HepG2 (cell line): ENCODE measurements at regions of chr3 and their contacts with region 1.

Region 1: DNA sequence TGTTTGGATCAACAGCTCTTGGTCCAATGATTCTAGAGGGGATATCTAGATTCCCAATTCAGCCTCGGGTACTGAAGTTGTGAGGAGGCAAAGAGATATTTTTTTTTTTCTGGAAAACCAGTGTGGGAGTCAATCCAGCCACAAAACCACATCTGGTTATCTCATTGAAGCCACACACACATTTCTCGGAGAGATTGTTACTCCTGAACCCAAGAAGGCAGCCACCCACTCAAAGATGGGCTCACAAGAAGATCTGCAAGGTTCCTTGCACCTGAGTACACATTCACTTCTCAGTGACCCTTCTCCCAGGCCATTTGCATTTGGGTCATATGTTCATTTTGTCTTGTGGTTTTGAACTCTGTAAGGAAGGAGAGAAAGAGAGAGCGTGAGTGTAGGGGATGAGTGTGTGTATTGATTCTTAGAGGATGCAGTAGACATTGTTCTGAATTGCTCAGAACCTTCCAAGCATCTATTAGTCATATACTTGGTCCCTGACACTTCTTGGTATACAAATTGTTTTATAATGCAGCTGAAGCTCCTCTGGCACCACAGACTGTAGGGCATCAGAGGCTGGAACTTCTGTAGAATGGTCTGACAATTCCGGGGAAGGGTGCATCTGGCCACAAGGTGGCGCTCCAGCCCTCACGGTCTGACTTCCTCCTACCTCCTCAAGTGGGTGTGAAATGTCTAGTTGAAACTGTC is 39.3 kb upstream of the TRA2B start:
- DNase-seq: peak; percentile 46
- ATAC-seq: peak; percentile 48
- H3K4me3 ChIP-seq: no peak overlapping the region
- H3K27ac ChIP-seq: no peak overlapping the region
- H3K4me1 ChIP-seq: peaks cover 26% of the 10 kb centered on the region
- H3K27me3 ChIP-seq: no peaks in the 10 kb centered on the region
- CTCF ChIP-seq: peak; percentile 86
- EP300 ChIP-seq: no peak
- POLR2A ChIP-seq: no peak
- RAD21 ChIP-seq: peak; percentile 59

Region 2: GRCh38 chr3:185572183-185572582 is 404.9 kb before region 1 on chr3:
- CTCF ChIA-PET with region 1: no interaction called
- POLR2A ChIA-PET with region 1: no interaction called
- in situ Hi-C with region 1: no loop called
- intact Hi-C with region 1: no loop called
- DNase-seq: no peak
- ATAC-seq: no peak
- H3K4me3 ChIP-seq: no peak overlapping the region
- H3K27ac ChIP-seq: no peak overlapping the region
- H3K4me1 ChIP-seq: peaks cover 6% of the 10 kb centered on the region; the same call in 1 of the 2 replicates
- H3K27me3 ChIP-seq: peaks cover 0 to 2% of the 10 kb centered on the region in 2 experiments; a peak in 1 of 5 replicates
- CTCF ChIP-seq: no peak
- EP300 ChIP-seq: no peak
- POLR2A ChIP-seq: no peak
- RAD21 ChIP-seq: no peak

Region 3: GRCh38 chr3:185927501-185928200 is 49.5 kb before region 1 on chr3:
- CTCF ChIA-PET with region 1: no interaction called
- POLR2A ChIA-PET with region 1: no interaction called
- in situ Hi-C with region 1: no loop called
- intact Hi-C with region 1: no loop called
- DNase-seq: peak; percentile 46
- ATAC-seq: peak; percentile 49
- H3K4me3 ChIP-seq: peak overlapping the region in 2 of 3 experiments; percentile 11 to 14; a peak in 2 of 6 replicates
- H3K27ac ChIP-seq: peak overlapping the region; percentile 41
- H3K4me1 ChIP-seq: peaks cover 81% of the 10 kb centered on the region
- H3K27me3 ChIP-seq: no peaks in the 10 kb centered on the region
- CTCF ChIP-seq: no peak
- EP300 ChIP-seq: no peak
- POLR2A ChIP-seq: 0 out of 4 replicates have a peak, but pooled peaks of 1 of the 2 experiments have one; percentile 39
- RAD21 ChIP-seq: no peak

Region 4: DNA sequence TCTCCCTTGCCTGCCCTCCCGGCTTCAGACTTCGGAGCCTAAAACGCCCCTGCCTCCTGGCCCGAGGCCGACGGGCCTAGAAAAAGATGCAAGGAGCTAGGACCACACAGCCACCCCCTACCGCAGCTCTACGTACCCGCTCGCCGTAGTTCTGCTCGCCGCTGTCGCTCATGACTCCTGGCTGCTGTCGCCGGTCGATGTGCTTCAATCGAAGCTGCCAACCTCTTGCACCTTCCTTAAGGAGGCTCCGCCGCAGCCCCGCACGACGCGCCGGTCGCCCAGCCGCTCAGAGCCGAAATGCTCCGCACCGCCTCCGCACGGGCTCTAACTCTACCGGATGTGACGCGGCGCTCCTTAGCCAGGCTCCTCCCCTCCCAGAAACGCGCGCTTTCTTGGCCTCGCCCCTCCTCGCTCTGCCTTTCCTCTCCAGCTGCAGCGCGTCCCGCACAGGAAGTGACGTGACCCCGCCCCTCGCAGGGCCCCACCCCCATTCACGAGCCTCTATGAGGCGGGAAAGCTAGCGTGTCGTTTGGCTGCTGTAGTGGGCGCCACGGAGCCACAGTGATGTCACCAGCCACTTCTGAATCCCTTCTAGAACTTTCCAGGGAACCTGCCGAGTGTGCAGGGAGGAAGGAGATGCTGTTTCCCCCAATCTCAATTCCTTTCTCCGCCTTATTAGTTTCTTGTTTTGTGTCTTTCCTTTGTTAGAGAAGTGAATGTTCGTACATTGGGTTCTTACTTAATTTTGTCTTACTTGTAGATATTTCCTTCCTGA is 39.3 kb before region 1 on chr3 and contains the start of gene TRA2B:
- CTCF ChIA-PET with region 1: interaction called, 12 read pairs
- POLR2A ChIA-PET with region 1: interaction called, 32 read pairs
- in situ Hi-C with region 1: no loop called
- intact Hi-C with region 1: loop called (anchors 1 kb)
- DNase-seq: peak; percentile 93
- ATAC-seq: peak; percentile 92
- H3K4me3 ChIP-seq: peak within 1 kb of the TSS; percentile 85 to 97 (median 95)
- H3K27ac ChIP-seq: peak within 1 kb of the TSS; percentile 96
- H3K4me1 ChIP-seq: peaks cover 29% of the 10 kb centered on the region
- H3K27me3 ChIP-seq: no peaks in the 10 kb centered on the region; a peak in 1 of 5 replicates
- CTCF ChIP-seq: peak; percentile 72
- EP300 ChIP-seq: peak; percentile 34 to 65; a peak in 3 of 4 replicates
- POLR2A ChIP-seq: peak; percentile 99 to 100
- RAD21 ChIP-seq: 0 out of 2 replicates have a peak, but pooled peaks have one; percentile 9
- total RNA-seq, gene TRA2B: 241 and 259 TPM in 2 replicates

Region 5: DNA sequence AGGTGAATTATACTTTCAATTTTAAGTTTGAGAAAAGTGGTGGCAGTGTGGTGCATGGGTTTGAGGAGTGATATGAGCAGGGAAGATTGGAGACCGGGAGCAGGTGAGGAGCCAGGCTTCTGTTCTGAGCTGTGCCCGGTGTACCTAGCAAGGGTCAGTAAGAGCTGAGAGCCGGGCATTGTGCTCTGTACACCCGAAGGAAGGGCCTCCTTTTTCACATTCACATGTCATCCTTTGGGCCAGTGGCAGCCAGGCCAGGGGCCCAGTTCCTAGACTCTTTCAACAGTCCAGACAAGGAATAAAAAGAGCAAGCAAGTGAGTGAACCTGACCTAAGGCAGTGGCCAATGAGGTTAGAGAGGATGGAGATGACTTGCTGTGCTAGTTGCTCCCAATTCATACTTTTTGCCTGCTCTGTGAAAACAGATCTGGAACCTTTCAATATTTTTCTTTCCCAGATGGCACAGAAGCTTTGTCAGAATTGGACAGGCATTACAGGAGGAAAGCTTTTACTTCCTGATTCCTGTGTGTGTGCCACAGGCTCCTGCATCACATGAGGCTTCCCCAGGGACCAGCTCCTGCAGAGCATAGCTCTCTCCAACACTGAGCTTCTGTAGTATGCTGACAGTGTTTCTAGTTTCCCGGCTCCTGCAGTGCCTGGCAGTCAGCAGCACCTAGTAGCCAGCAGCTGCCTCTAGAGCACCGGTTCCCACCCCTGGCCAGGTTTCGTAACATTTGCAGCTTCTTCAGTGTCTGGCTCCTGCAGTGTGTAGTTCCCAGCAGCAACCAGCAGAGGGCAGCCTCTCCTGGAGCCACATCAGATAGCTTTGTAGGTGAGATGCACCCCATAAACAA is 34.0 kb before region 1 on chr3:
- CTCF ChIA-PET with region 1: interaction called, 12 read pairs
- POLR2A ChIA-PET with region 1: interaction called, 32 read pairs
- in situ Hi-C with region 1: no loop called
- intact Hi-C with region 1: loop called (anchors 1 kb)
- DNase-seq: peak; percentile 88
- ATAC-seq: peak; percentile 97
- H3K4me3 ChIP-seq: peak overlapping the region; percentile 10 to 59 (median 36)
- H3K27ac ChIP-seq: peak overlapping the region; percentile 13
- H3K4me1 ChIP-seq: peaks cover 35% of the 10 kb centered on the region
- H3K27me3 ChIP-seq: no peaks in the 10 kb centered on the region
- CTCF ChIP-seq: peak; percentile 96
- EP300 ChIP-seq: 0 out of 4 replicates have a peak, but pooled peaks of 1 of the 2 experiments have one; percentile 11
- POLR2A ChIP-seq: no peak
- RAD21 ChIP-seq: peak; percentile 82

Region 6: GRCh38 chr3:185954366-185954723 is 22.8 kb before region 1 on chr3:
- CTCF ChIA-PET with region 1: interaction called, 10 read pairs
- POLR2A ChIA-PET with region 1: interaction called, 30 read pairs
- in situ Hi-C with region 1: no loop called
- intact Hi-C with region 1: loop called (anchors 1 kb)
- DNase-seq: peak; percentile 36
- ATAC-seq: no peak
- H3K4me3 ChIP-seq: peak overlapping the region in 1 of 3 experiments; percentile 22; a peak in 1 of 6 replicates
- H3K27ac ChIP-seq: peak overlapping the region; percentile 82
- H3K4me1 ChIP-seq: peaks cover 46% of the 10 kb centered on the region
- H3K27me3 ChIP-seq: no peaks in the 10 kb centered on the region
- CTCF ChIP-seq: no peak
- EP300 ChIP-seq: no peak
- POLR2A ChIP-seq: no peak
- RAD21 ChIP-seq: no peak

Region 7: GRCh38 chr3:185959609-185960517 is 17.3 kb before region 1 on chr3:
- CTCF ChIA-PET with region 1: no interaction called
- POLR2A ChIA-PET with region 1: interaction called, 18 read pairs
- in situ Hi-C with region 1: no loop called
- intact Hi-C with region 1: loop called (anchors 1 kb)
- DNase-seq: peak; percentile 88
- ATAC-seq: peak; percentile 74
- H3K4me3 ChIP-seq: peak overlapping the region; percentile 14 to 56 (median 53)
- H3K27ac ChIP-seq: peak overlapping the region; percentile 95
- H3K4me1 ChIP-seq: peaks cover 62% of the 10 kb centered on the region
- H3K27me3 ChIP-seq: no peaks in the 10 kb centered on the region
- CTCF ChIP-seq: no peak
- EP300 ChIP-seq: peak in 1 of 2 experiments; percentile 32; a peak in 1 of 4 replicates
- POLR2A ChIP-seq: peak in 1 of 2 experiments; percentile 62; a peak in 2 of 4 replicates
- RAD21 ChIP-seq: no peak

Region 8: DNA sequence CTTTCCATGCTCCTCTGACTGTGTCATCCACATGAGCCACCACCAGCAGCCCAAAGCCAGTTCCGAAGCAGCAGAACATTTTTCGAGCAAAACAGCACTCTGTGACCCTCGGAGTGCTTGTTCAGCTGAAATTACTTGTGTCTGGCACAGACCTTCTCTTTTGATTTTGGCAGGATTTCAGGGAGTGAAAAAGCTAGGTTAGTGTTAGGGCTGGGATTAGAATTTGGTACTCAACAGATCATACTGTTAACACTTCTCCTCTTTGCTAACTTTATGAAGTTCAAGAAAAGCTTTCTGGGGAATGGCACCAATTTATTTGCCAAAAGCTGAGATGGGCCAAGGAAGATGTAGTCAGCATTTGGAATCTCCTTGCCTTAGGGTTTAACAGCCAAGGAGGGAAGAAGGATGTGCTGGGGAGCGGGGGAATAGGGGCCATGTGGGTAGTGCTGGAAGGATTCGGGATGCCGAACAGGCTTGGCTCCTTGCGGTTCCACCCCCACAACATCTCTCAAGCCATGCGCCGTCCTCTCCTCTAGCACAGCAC is 15.8 kb after region 1 on chr3:
- CTCF ChIA-PET with region 1: no interaction called
- POLR2A ChIA-PET with region 1: no interaction called
- in situ Hi-C with region 1: no loop called
- intact Hi-C with region 1: no loop called
- DNase-seq: no peak
- ATAC-seq: no peak
- H3K4me3 ChIP-seq: no peak overlapping the region
- H3K27ac ChIP-seq: no peak overlapping the region
- H3K4me1 ChIP-seq: 0 out of 2 replicates have a peak, but pooled peaks cover 5% of the 10 kb centered on the region
- H3K27me3 ChIP-seq: peaks cover 2 to 18% of the 10 kb centered on the region in 2 experiments; a peak in 4 of 5 replicates
- CTCF ChIP-seq: no peak
- EP300 ChIP-seq: no peak
- POLR2A ChIP-seq: no peak
- RAD21 ChIP-seq: no peak

Region 9: DNA sequence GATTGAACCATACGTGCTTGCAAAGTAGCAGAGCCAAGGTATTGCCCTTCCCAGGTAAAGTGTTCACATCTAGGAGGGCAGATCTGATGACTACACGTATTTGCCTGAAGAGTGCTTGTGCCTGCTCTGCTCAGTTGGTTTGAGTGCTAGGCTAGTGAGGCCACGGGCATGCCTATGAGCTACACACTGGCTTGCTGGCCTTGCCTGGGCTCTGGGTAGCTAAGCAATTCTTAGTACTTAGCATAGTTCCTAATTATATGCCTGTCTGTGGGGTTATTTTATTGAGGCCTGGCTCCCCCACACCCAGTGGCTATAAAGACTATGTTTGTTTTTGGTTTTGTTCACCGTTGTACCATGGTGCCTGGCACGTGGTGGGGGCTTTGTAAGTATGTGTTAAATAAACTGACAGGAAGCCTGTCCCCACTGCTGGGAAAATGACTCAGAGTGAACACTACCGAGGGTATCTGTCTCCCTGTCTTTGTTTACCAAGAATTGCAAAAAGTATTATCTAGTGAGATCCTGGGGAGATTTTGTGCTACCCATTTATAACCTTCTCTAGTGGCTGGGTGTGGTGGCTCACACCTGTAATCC is 203.9 kb after region 1 on chr3:
- CTCF ChIA-PET with region 1: no interaction called
- POLR2A ChIA-PET with region 1: no interaction called
- in situ Hi-C with region 1: no loop called
- intact Hi-C with region 1: no loop called
- DNase-seq: no peak
- ATAC-seq: no peak
- H3K4me3 ChIP-seq: no peak overlapping the region
- H3K27ac ChIP-seq: no peak overlapping the region
- H3K4me1 ChIP-seq: peaks cover 15% of the 10 kb centered on the region
- H3K27me3 ChIP-seq: no peaks in the 10 kb centered on the region
- CTCF ChIP-seq: no peak
- EP300 ChIP-seq: no peak
- POLR2A ChIP-seq: no peak
- RAD21 ChIP-seq: no peak

Region 10: DNA sequence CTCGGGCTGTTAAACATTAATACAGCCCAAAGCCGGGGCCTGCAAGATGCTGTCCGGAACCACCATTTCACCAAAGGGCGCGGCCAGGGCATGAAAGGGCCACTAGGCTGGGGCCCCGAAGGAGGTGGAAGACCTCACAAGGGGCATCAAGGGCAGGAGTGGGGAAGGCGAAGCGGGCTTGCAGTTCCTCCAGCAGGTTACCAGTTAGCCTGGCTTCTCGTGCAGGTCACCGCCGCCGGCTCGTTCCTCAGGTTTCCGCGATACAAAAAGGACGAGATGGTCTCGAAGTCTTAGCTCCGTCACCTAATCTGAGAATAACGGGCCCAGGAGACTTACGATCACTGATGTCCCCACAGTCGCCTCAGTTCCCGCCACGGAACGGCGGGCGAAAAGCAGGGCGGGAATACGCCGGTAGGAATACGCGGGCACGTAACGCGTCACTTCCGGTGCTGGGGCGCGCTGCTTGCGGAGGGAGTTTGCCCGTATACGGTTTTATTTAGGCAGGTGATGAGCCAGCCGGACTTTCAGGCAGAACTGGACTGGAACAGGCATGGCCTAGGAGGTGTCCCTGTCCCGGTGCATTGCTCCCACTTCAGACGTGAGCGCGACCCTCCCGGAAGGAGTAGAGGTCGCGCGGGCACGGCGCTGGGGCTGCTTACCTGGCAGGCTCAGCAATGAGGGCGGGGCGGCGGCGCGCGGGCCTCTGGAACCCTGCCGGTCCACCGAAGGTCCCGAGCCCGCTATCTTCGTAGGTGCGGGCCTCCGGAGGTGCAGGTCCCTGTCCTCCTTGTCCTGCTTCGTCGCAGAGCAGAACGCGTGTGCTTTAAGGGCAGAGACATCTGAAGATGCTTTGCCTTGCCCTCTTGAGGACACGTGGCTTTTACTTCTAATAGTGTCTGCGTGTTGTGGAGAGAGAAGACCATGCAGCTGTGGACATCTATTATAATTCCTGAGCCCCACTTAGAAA is 829.2 kb after region 1 on chr3 and contains the start of gene RFC4:
- CTCF ChIA-PET with region 1: no interaction called
- POLR2A ChIA-PET with region 1: no interaction called
- in situ Hi-C with region 1: loop called (anchors 25 kb)
- intact Hi-C with region 1: no loop called
- DNase-seq: peak; percentile 72
- ATAC-seq: peak; percentile 95
- H3K4me3 ChIP-seq: peak within 1 kb of the TSS; percentile 72 to 90 (median 73)
- H3K27ac ChIP-seq: peak within 1 kb of the TSS; percentile 82
- H3K4me1 ChIP-seq: peaks cover 28% of the 10 kb centered on the region
- H3K27me3 ChIP-seq: peaks cover 1 to 3% of the 10 kb centered on the region in 2 experiments; a peak in 2 of 5 replicates
- CTCF ChIP-seq: peak; percentile 28; the same call in 1 of the 2 replicates
- EP300 ChIP-seq: no peak
- POLR2A ChIP-seq: peak; percentile 83 to 91
- RAD21 ChIP-seq: peak; percentile 25; the same call in 1 of the 2 replicates
- total RNA-seq, gene RFC4: 103 and 109 TPM in 2 replicates